ENCODE measurements at regions of chr16 and their contacts with region 1.

Region 1: GRCh38 chr16:47141773-47142485 is 1.8 kb downstream of the NETO2 start:
- DNase-seq: peak; percentile 92
- H3K4me3 Mint-ChIP-seq: peak overlapping the region; percentile 78
- H3K27ac Mint-ChIP-seq: peak overlapping the region; percentile 49
- H3K4me1 Mint-ChIP-seq: peaks cover 52% of the 10 kb centered on the region
- H3K27me3 Mint-ChIP-seq: peaks cover 6% of the 10 kb centered on the region

Region 2: GRCh38 chr16:46947900-46948547 is 193.9 kb before region 1 on chr16:
- CTCF ChIA-PET with region 1: interaction called, 21 read pairs
- POLR2A ChIA-PET with region 1: no interaction called
- intact Hi-C with region 1: loop called (anchors 1 kb)
- DNase-seq: peak; percentile 57
- H3K4me3 Mint-ChIP-seq: no peak overlapping the region
- H3K27ac Mint-ChIP-seq: peak overlapping the region; percentile 76
- H3K4me1 Mint-ChIP-seq: peaks cover 34% of the 10 kb centered on the region
- H3K27me3 Mint-ChIP-seq: no peaks in the 10 kb centered on the region

Region 3: GRCh38 chr16:47037746-47038458 is 104.0 kb before region 1 on chr16:
- CTCF ChIA-PET with region 1: interaction called, 113 read pairs
- POLR2A ChIA-PET with region 1: interaction called, 11 read pairs
- intact Hi-C with region 1: loop called (anchors 1 kb)
- DNase-seq: peak; percentile 92
- H3K4me3 Mint-ChIP-seq: peak overlapping the region; percentile 71
- H3K27ac Mint-ChIP-seq: no peak overlapping the region
- H3K4me1 Mint-ChIP-seq: peaks cover 6% of the 10 kb centered on the region
- H3K27me3 Mint-ChIP-seq: peaks cover 4% of the 10 kb centered on the region

Region 4: GRCh38 chr16:47125757-47126156 is 16.2 kb before region 1 on chr16:
- CTCF ChIA-PET with region 1: interaction called, 20 read pairs
- POLR2A ChIA-PET with region 1: no interaction called
- intact Hi-C with region 1: no loop called
- DNase-seq: no peak
- H3K4me3 Mint-ChIP-seq: no peak overlapping the region
- H3K27ac Mint-ChIP-seq: no peak overlapping the region
- H3K4me1 Mint-ChIP-seq: peaks cover 10% of the 10 kb centered on the region
- H3K27me3 Mint-ChIP-seq: no peaks in the 10 kb centered on the region

Region 5: DNA sequence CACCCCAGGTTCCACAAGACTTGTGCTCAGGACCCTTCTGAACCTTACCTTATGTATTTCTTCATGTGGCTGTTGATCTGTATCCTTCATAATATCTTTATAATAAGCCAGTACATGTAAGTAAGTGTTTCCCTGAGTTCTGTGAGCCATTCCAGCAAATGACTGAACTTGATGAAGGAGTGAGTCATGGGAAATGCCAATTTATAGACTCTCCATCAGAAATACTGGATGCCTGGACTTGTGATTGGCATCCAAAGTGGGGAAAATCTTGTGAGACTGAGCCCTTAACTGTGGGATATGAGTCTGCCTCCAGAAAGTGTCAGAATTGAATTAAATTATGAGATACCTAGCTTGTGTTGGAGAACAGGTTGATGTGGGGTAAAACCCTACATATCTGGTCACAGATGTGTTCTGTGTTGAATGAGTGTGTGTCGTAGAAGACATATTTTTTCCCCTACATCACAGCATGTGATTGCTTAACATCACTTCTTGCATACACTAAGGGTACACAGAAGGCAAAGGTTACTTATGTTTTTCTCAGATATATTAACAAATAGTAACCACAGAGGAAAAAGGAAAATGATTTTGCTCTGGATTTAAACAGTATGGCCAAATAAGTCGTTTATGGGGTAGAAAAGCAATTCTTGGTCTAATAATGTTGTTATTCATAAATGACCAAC is 72.0 kb after region 1 on chr16:
- CTCF ChIA-PET with region 1: no interaction called
- POLR2A ChIA-PET with region 1: no interaction called
- intact Hi-C with region 1: no loop called
- DNase-seq: no peak
- H3K4me3 Mint-ChIP-seq: no peak overlapping the region
- H3K27ac Mint-ChIP-seq: no peak overlapping the region
- H3K4me1 Mint-ChIP-seq: no peaks in the 10 kb centered on the region
- H3K27me3 Mint-ChIP-seq: no peaks in the 10 kb centered on the region

Region 6: GRCh38 chr16:47779201-47780016 is 637.5 kb after region 1 on chr16:
- CTCF ChIA-PET with region 1: no interaction called
- POLR2A ChIA-PET with region 1: no interaction called
- intact Hi-C with region 1: loop called (anchors 1 kb)
- DNase-seq: peak; percentile 61
- H3K4me3 Mint-ChIP-seq: peak overlapping the region; percentile 68
- H3K27ac Mint-ChIP-seq: peak overlapping the region; percentile 64
- H3K4me1 Mint-ChIP-seq: peaks cover 15% of the 10 kb centered on the region
- H3K27me3 Mint-ChIP-seq: no peaks in the 10 kb centered on the region

Region 7: GRCh38 chr16:48117217-48118105 is 975.5 kb after region 1 on chr16:
- CTCF ChIA-PET with region 1: interaction called, 7 read pairs
- POLR2A ChIA-PET with region 1: no interaction called
- intact Hi-C with region 1: loop called (anchors 5 kb)
- DNase-seq: peak; percentile 69
- H3K4me3 Mint-ChIP-seq: no peak overlapping the region
- H3K27ac Mint-ChIP-seq: no peak overlapping the region
- H3K4me1 Mint-ChIP-seq: peaks cover 5% of the 10 kb centered on the region
- H3K27me3 Mint-ChIP-seq: peaks cover 13% of the 10 kb centered on the region

Region 8: DNA sequence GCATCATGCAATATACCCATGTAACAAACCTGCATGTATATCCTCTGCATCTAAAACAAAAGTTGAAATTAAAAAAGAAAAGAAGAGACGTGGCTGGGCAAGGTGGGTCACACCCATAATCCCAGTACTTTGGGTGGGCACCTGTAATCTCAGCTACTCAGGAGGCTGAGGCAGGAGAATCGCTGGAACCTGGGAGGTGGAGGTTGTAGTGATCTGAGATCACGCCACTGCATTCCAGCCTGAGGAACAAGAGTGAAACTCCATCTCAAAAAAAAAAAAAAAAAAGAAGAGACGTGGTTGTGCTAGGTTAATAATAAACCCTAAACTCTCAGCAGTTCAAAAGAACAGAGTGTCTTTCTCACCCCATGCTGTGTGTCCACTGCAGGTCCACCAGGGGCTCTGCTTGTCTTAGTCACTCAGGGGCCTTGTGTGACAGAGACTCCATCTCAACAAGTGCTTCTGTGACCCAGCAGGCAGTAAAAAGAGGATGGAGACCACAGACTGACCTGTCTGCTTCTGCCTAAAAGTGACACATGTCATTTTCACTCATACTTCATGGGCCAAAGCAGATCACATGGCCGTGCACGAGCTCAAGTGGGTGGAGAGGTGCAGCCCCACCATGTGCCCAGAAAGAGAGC is 1490.3 kb after region 1 on chr16:
- CTCF ChIA-PET with region 1: interaction called, 3 read pairs
- POLR2A ChIA-PET with region 1: no interaction called
- intact Hi-C with region 1: loop called (anchors 5 kb)
- DNase-seq: no peak
- H3K4me3 Mint-ChIP-seq: no peak overlapping the region
- H3K27ac Mint-ChIP-seq: no peak overlapping the region
- H3K4me1 Mint-ChIP-seq: peaks cover 8% of the 10 kb centered on the region
- H3K27me3 Mint-ChIP-seq: peaks cover 2% of the 10 kb centered on the region